CD8-positive, alpha-beta memory T cell (primary cell): ENCODE measurements at regions of chr14 and their contacts with region 1.

Region 1: DNA sequence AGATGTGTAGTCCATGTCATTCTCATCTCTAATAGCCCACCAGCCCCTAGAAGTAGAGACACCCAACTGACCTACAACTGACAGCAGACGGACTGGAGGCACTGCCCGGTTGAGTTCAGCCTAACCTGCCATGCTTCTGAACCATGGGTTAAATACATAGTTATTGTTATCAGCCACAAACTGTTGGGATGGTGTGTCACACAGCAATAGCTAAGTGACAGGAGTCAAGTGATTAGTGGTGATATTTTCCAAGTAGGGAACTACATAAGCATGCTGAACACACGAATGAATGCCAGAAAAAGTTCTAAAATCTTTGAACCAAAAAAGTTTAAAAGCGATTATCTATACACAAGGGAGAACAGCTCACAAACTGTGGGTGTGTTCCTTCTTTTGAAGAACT is 80.1 kb downstream of the SYNE3 start:
- DNase-seq: no peak
- H3K4me3 ChIP-seq: no peak overlapping the region
- H3K4me3 Mint-ChIP-seq: no peak overlapping the region
- H3K27ac ChIP-seq: no peak overlapping the region
- H3K27ac Mint-ChIP-seq: peak overlapping the region in 1 of 8 donors; percentile 68
- H3K4me1 ChIP-seq: no peaks in the 10 kb centered on the region
- H3K4me1 Mint-ChIP-seq: no peaks in the 10 kb centered on the region
- H3K27me3 ChIP-seq: no peaks in the 10 kb centered on the region
- H3K27me3 Mint-ChIP-seq: no peaks in the 10 kb centered on the region

Region 2: GRCh38 chr14:95424529-95424928 is 11.8 kb before region 1 on chr14:
- CTCF ChIA-PET with region 1: interaction called, 11 read pairs
- POLR2A ChIA-PET with region 1: no interaction called
- DNase-seq: no peak
- H3K4me3 ChIP-seq: no peak overlapping the region
- H3K4me3 Mint-ChIP-seq: no peak overlapping the region
- H3K27ac ChIP-seq: no peak overlapping the region
- H3K27ac Mint-ChIP-seq: peak overlapping the region in 2 of 8 donors; percentile 10 to 21
- H3K4me1 ChIP-seq: no peaks in the 10 kb centered on the region
- H3K4me1 Mint-ChIP-seq: peaks cover 0 to 9% (median 2%) of the 10 kb centered on the region in 3 donors
- H3K27me3 ChIP-seq: no peaks in the 10 kb centered on the region
- H3K27me3 Mint-ChIP-seq: peaks cover 0 to 3% of the 10 kb centered on the region in 2 donors

Region 3: GRCh38 chr14:95472819-95473251 is 36.5 kb after region 1 on chr14:
- CTCF ChIA-PET with region 1: no interaction called
- POLR2A ChIA-PET with region 1: no interaction called
- DNase-seq: peak in 1 of 5 donors; percentile 13
- H3K4me3 ChIP-seq: no peak overlapping the region
- H3K4me3 Mint-ChIP-seq: no peak overlapping the region
- H3K27ac ChIP-seq: no peak overlapping the region
- H3K27ac Mint-ChIP-seq: peak overlapping the region in 3 of 8 donors; percentile 17 to 65 (median 40)
- H3K4me1 ChIP-seq: no peaks in the 10 kb centered on the region
- H3K4me1 Mint-ChIP-seq: peaks cover 8 to 19% (median 10%) of the 10 kb centered on the region in 3 donors
- H3K27me3 ChIP-seq: no peaks in the 10 kb centered on the region
- H3K27me3 Mint-ChIP-seq: peaks cover 0 to 1% of the 10 kb centered on the region in 2 donors